Left cardiac atrium (tissue), 4 donors: ENCODE measurements at regions of chr1 and their contacts with region 1.

Region 1: DNA sequence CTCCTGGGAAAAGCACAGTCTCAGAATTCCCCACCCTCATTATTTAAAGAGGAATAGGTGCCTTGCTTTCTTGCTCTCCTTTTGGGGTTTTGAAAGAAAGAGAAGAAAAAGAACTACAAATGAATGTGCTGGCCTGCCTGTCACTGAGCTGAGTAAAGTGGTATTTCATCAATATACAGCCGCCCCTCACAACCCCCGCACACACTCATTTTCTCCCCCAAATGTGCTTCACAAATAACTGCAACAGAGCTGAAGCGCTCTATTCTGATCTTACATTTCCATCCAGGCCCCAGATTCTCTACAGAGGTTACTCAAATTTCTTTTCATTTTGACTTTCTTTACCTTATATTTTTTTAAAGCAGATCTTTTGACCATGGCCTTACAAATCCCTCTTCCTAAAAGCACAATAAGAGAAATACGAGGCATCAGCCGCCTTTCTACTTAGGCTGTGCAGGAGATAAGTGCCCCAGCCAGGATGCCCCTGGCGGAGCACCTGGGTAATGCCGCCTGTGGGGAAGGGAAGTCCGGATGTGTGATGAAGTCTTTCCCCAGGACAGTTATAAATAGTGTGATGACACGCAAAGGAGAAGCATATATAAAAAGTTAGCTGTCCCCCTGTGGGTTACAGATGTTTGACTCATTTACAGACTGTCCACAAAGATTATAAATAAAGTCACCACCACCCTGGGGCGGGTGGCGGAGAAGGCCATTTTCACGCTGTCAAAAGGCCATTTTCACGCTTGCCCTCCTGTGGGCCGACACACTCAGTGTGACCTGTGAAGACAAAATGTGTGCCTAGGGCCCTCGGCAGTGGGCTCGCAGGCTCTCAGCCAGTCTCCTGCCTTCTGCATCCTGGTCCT is 6.5 kb downstream of the KCNN3 start:
- DNase-seq: no peak
- ATAC-seq: peak in 1 of 2 donors; percentile 36

Region 2: GRCh38 chr1:154765970-154766369 is 97.6 kb before region 1 on chr1:
- intact Hi-C with region 1: loop called in 1 of 2 experiments (anchors 5 kb)
- DNase-seq: no peak
- ATAC-seq: no peak

Region 3: DNA sequence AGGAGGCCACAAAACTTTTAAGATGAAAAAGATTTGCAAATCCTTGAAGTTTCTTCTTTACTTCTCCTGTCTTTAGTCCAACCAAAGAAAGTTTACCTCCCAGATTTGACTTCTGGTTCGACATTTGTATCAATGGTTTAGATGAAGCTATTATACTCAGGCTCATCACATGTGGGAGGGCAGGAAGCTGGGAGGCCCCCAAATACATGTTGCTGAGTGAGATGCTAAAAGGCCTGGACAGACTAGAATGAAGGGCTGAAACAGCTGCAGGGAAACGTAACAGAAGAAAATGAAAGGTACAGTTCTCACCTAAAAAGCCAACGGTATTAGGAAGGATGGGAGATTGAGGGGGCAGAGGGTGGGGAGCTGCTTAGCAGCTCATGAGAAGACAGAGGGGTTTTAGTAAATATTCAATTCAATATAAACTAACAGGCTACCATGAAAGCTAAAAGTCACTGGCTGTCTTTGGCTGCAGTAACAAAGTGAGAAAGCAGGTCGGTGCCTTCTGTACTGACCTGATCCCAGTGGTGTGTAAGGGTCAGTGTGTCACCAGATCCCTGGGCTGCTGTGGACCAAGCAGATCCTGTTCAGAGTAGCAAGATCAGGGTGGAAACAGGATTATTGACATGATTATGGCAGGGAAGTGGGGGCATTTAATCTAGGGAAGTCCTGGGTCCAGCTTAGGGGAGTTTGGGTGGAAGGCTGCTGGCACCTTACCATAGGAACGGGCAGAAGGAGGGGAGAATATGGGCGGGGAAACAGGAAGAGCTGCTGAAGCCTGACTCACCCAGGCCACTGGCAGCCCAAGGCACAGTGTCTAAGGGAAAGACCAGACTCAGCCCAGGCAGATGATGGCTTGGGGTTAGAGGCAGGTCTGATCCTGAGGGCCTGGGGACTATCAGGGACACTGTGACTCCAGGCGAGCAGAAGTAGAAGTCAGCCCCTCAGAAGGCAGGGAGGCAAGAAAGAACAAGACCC is 53.8 kb before region 1 on chr1:
- intact Hi-C with region 1: loop called in 1 of 2 experiments (anchors 10 kb)
- DNase-seq: peak; percentile 68
- ATAC-seq: peak; percentile 60 to 87